ENCODE measurements at regions of chr17 and their contacts with region 1.

Region 1: GRCh38 chr17:71460943-71461342 is 659.9 kb upstream of the SOX9 start:
- DNase-seq: no peak
- ATAC-seq: no peak
- H3K4me3 ChIP-seq: no peak overlapping the region
- H3K27ac ChIP-seq: no peak overlapping the region
- H3K4me1 ChIP-seq: no peaks in the 10 kb centered on the region
- H3K27me3 ChIP-seq: peaks cover 0 to 4% of the 10 kb centered on the region in 2 experiments; a peak in 1 of 5 replicates
- CTCF ChIP-seq: no peak
- EP300 ChIP-seq: no peak
- POLR2A ChIP-seq: no peak
- RAD21 ChIP-seq: no peak

Region 2: GRCh38 chr17:71084219-71084618 is 376.7 kb before region 1 on chr17:
- CTCF ChIA-PET with region 1: interaction called, 3 read pairs
- POLR2A ChIA-PET with region 1: no interaction called
- in situ Hi-C with region 1: no loop called
- intact Hi-C with region 1: loop called (anchors 10 kb)
- DNase-seq: peak; percentile 26
- ATAC-seq: peak; percentile 78
- H3K4me3 ChIP-seq: no peak overlapping the region
- H3K27ac ChIP-seq: no peak overlapping the region
- H3K4me1 ChIP-seq: no peaks in the 10 kb centered on the region
- H3K27me3 ChIP-seq: no peaks in the 10 kb centered on the region
- CTCF ChIP-seq: peak; percentile 66
- EP300 ChIP-seq: no peak
- POLR2A ChIP-seq: no peak
- RAD21 ChIP-seq: peak; percentile 35; the same call in 1 of the 2 replicates

Region 3: DNA sequence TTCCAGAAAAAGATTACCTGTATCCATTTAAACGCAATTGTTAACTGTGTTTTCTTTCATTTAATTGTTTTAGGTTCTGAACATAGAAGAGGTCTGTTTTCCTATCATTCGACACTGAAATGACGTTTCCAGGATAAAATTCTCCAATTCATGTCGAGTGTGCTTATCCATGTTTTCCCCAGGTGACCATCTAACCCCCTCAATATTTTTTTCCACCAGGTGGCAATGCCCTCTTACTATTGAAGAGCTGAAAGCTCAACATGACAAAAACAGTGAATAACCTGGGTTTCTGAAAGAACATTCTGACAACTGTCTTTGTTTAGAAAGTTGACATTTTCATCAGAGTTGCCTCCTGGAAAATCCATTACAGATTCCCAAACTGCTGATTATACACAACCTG is 342.9 kb before region 1 on chr17:
- CTCF ChIA-PET with region 1: no interaction called
- POLR2A ChIA-PET with region 1: no interaction called
- in situ Hi-C with region 1: no loop called
- intact Hi-C with region 1: loop called (anchors 2 kb)
- DNase-seq: no peak
- ATAC-seq: no peak
- H3K4me3 ChIP-seq: no peak overlapping the region
- H3K27ac ChIP-seq: no peak overlapping the region
- H3K4me1 ChIP-seq: no peaks in the 10 kb centered on the region; the same call in 1 of the 2 replicates
- H3K27me3 ChIP-seq: no peaks in the 10 kb centered on the region
- CTCF ChIP-seq: peak; percentile 53
- EP300 ChIP-seq: no peak
- POLR2A ChIP-seq: no peak
- RAD21 ChIP-seq: no peak

Region 4: DNA sequence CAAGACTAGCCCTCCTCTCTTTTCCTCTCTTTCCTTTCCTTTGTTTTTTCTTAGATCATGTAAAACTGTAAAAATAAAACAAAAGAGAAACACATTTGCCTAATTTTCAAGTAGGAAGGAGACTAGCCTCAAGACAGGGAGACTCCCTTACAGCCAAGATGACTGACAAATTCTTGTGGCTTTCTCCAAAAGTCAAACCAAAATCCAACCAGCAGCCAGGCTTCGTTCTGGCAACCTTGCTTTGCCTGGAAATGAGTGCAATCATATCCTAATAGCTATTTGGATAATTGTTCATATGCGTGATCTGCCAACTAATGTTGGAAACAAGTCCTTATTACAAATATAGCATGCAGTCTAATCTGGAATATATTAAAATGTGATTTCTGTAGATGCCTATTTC is 209.0 kb before region 1 on chr17:
- CTCF ChIA-PET with region 1: no interaction called
- POLR2A ChIA-PET with region 1: no interaction called
- in situ Hi-C with region 1: no loop called
- intact Hi-C with region 1: no loop called
- DNase-seq: no peak
- ATAC-seq: no peak
- H3K4me3 ChIP-seq: no peak overlapping the region
- H3K27ac ChIP-seq: no peak overlapping the region
- H3K4me1 ChIP-seq: no peaks in the 10 kb centered on the region
- H3K27me3 ChIP-seq: no peaks in the 10 kb centered on the region
- CTCF ChIP-seq: no peak
- EP300 ChIP-seq: no peak
- POLR2A ChIP-seq: no peak
- RAD21 ChIP-seq: no peak

Region 5: DNA sequence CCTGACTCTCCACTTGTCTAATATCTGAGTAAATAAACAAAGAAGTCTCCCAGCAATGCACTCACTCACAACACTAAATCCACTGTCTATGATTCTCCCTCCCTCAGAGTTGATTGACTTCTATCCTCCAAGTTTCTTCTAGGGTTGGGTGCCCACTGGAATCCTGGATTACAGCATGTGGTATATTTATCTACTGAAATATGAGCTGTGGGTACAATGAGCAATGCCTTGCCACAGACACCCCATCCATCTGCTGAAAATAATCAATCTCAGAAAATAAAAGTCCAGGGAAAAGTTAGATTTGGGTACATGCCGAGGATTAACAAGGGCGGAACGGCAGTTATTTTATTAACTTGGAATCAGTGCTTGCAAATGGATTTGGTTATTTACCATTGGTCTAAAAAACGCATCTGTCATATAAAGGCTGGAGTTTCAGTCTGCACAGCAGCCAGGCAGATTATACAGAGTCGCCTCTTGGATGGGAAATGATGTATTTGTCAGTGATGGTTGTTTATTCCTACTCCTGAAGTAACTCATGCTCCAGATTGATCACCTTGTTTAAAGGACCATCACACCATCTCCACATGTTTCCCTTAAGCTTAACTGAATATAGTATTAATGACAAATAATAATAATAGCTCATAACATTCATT is 465.9 kb after region 1 on chr17:
- CTCF ChIA-PET with region 1: no interaction called
- POLR2A ChIA-PET with region 1: no interaction called
- in situ Hi-C with region 1: no loop called
- intact Hi-C with region 1: no loop called
- DNase-seq: no peak
- ATAC-seq: no peak
- H3K4me3 ChIP-seq: no peak overlapping the region
- H3K27ac ChIP-seq: no peak overlapping the region
- H3K4me1 ChIP-seq: no peaks in the 10 kb centered on the region
- H3K27me3 ChIP-seq: no peaks in the 10 kb centered on the region
- CTCF ChIP-seq: no peak
- EP300 ChIP-seq: no peak
- POLR2A ChIP-seq: no peak
- RAD21 ChIP-seq: no peak